ENCODE measurements at regions of chr15 and their contacts with region 1.

Region 1: GRCh38 chr15:74127260-74127953 is 3.0 kb upstream of the ISLR2 start:
- DNase-seq: peak; percentile 90 to 96
- H3K4me3 ChIP-seq: peak overlapping the region; percentile 36 to 49 (median 40)
- H3K27ac ChIP-seq: no peak overlapping the region
- H3K4me1 ChIP-seq: peaks cover 28 to 45% (median 37%) of the 10 kb centered on the region in 4 donors
- H3K27me3 ChIP-seq: peaks cover 38 to 100% (median 76%) of the 10 kb centered on the region in 3 donors
- CTCF ChIP-seq: peak in 5 of 7 experiments; percentile 90 to 98 (median 95)
- EP300 ChIP-seq: no peak
- POLR2A ChIP-seq: no peak

Region 2: GRCh38 chr15:73822998-73823397 is 304.4 kb before region 1 on chr15:
- intact Hi-C with region 1: no loop called
- DNase-seq: peak in 1 of 2 donors; percentile 50
- H3K4me3 ChIP-seq: no peak overlapping the region
- H3K27ac ChIP-seq: no peak overlapping the region
- H3K4me1 ChIP-seq: no peaks in the 10 kb centered on the region
- H3K27me3 ChIP-seq: peaks cover 0 to 24% (median 3%) of the 10 kb centered on the region in 3 donors
- CTCF ChIP-seq: no peak
- EP300 ChIP-seq: no peak
- POLR2A ChIP-seq: no peak

Region 3: DNA sequence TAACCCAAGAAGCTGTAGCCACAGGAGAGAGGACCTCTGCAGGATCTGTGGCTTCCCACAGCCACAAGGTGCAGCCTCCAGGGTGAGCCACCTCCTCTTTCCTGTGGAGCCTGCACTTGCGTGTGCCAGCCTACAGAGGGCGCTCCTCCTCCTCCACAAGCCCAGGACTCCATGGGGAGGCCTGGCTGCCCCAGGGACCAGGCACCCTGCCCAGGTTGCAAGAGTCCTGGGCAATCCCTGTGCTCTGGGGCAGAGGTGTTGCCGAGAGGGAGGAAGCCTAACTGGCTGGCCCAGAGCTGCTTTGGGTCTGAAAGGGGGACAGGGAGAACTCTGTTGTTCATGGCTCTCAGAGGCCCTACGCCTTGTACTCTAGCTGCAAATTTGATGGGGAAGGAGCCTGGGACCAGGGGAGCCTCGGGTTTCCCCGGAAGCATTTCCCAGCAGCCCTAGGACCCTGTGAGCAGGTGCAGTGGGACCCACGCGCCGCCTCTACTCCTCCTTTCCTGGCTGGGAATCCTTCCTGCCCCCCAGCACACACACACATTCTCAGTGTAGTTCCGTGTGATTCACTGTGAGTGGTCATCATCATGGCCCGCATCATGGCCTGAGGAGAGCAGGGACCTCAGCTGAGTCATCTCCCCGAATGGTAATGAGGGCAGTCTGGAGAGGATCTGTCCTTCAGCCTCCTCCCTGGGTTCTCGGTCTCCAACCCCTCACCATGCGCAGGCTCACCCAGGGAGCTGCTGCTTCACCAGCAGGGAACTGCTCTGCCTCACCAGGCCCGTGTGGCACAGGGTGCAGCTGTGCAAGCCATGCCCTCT is 229.8 kb before region 1 on chr15:
- intact Hi-C with region 1: no loop called
- DNase-seq: peak; percentile 36 to 65
- H3K4me3 ChIP-seq: no peak overlapping the region
- H3K27ac ChIP-seq: no peak overlapping the region
- H3K4me1 ChIP-seq: peaks cover 0 to 12% (median 4%) of the 10 kb centered on the region in 4 donors
- H3K27me3 ChIP-seq: peaks cover 0 to 2% (median 0%) of the 10 kb centered on the region in 3 donors
- CTCF ChIP-seq: peak in 5 of 7 experiments; percentile 58 to 85 (median 61)
- EP300 ChIP-seq: no peak
- POLR2A ChIP-seq: no peak

Region 4: GRCh38 chr15:74307827-74308644 is 180.6 kb after region 1 on chr15:
- intact Hi-C with region 1: loop called (anchors 5 kb)
- DNase-seq: peak; percentile 59 to 87
- H3K4me3 ChIP-seq: no peak overlapping the region
- H3K27ac ChIP-seq: no peak overlapping the region
- H3K4me1 ChIP-seq: no peaks in the 10 kb centered on the region
- H3K27me3 ChIP-seq: peaks cover 0 to 73% (median 25%) of the 10 kb centered on the region in 3 donors
- CTCF ChIP-seq: peak in 5 of 7 experiments; percentile 38 to 61 (median 50)
- EP300 ChIP-seq: no peak
- POLR2A ChIP-seq: no peak

Region 5: DNA sequence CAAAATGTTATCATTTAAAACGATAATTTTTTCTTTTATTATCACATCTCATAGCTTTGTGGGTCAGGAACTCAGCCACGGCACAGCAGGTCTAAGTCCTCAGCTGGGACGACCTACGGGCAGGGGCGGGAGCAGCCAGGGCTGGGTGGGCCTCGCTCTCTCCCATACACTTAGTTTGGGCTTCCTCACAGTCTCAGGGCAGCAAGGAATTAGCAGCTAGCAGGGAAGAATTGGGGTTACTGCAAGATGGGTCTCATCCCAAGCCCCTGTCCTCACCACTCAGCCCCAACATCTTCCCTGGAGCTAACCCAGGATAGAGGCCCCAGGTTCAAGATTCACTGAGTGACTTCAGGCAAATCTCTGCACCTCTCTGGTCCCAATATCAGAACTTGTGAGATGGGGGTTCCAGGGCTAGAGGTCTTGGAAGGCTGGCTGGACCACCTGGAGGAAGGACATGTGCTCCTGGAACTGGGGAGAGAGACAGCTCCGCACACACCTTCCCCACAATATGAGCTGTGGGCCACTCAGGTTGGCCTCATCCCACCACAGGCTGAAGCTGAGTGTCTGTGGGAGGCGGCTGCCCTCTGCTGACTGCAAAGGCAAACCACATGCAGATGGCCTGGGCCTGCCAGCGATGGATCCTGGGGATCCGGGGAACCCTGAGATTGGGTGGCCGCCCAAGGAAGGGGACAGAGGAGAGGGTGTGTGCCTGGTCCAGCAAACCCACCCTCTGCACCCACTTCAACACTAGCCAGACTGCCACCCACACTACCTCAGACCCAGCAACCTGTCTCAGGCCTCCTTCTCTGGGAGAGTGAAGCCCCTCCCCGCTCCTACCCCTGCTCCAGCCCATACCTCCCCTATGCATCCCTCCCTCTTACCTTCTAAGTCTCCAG is 195.0 kb after region 1 on chr15:
- intact Hi-C with region 1: loop called (anchors 5 kb)
- DNase-seq: peak; percentile 59 to 89
- H3K4me3 ChIP-seq: no peak overlapping the region
- H3K27ac ChIP-seq: no peak overlapping the region
- H3K4me1 ChIP-seq: peaks cover 0 to 26% (median 13%) of the 10 kb centered on the region in 4 donors
- H3K27me3 ChIP-seq: peaks cover 0 to 12% (median 0%) of the 10 kb centered on the region in 3 donors
- CTCF ChIP-seq: peak in 5 of 7 experiments; percentile 66 to 79 (median 77)
- EP300 ChIP-seq: no peak
- POLR2A ChIP-seq: no peak